PC-3 (cell line): ENCODE measurements at regions of chr12 and their contacts with region 1.

Region 1: DNA sequence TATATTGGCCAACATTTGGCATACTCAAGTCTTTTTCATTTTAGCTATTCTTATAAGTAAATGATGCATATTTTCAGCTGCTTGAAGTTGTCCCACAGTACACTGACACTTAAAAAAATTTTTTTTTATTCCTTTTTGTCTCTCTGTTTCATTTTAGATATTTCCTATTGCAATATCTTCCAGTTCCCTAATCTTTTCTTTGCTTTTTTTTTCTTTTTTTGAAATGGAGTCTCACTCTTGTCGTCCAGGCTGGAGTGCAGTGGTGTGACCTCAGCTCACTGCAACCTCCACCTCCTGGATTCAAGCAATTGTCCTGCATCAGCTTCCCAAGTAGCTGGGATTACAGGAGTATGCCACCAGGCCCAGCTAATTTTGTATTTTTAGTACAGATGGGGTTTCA is 217.4 kb upstream of the KRR1 start:
- DNase-seq: no peak
- ATAC-seq: no peak
- H3K4me3 ChIP-seq: no peak overlapping the region
- H3K27ac ChIP-seq: no peak overlapping the region
- H3K4me1 ChIP-seq: peaks cover 24% of the 10 kb centered on the region
- H3K27me3 ChIP-seq: no peaks in the 10 kb centered on the region
- CTCF ChIP-seq: no peak

Region 2: GRCh38 chr12:75996861-75997447 is 268.1 kb after region 1 on chr12:
- CTCF ChIA-PET with region 1: no interaction called
- POLR2A ChIA-PET with region 1: interaction called, 29 read pairs
- intact Hi-C with region 1: no loop called
- DNase-seq: peak; percentile 47
- ATAC-seq: peak; percentile 59
- H3K4me3 ChIP-seq: no peak overlapping the region
- H3K27ac ChIP-seq: peak overlapping the region; percentile 32
- H3K4me1 ChIP-seq: peaks cover 50% of the 10 kb centered on the region
- H3K27me3 ChIP-seq: no peaks in the 10 kb centered on the region
- CTCF ChIP-seq: no peak